ENCODE measurements at regions of chr6 and their contacts with region 1.

Region 1: DNA sequence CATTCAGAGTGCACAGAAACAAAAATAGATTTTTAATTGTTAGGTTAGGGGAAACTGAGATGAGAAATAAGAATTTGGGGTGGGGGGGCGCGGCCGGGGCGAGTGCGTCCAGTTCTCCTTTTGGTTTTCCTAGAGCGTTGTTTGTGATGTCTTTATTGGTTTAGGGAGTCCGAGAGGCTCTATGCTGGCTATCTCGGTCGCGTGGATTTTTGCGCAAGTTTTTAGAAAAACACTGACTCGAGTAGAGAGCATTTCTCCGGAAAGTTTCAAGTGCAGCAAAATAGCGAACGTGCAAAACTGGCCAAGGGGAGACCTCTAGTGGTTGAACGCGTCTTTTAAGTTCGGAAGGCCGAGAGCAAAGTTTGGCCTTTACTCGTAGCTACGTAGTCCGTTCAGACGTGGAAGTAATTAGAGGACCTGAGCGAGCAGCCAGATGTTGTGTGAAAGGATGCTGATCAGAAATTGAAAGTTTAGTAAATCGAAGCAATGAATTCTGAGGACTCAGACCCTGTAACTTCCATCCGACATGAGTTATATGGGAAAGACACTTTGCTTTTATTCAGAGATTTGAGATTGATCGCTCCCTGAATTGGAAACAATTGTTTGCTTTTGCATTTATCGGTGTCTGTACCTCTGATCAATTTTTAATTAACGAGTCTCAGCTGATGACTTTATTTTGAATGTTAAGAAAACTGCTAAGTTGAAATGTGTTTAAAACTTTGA is 2.7 kb downstream of the L3MBTL3 start:
- DNase-seq: peak; percentile 49 to 95 (median 78)

Region 2: GRCh38 chr6:129498950-129499842 is 521.9 kb before region 1 on chr6:
- intact Hi-C with region 1: loop called (anchors 10 kb)
- DNase-seq: no peak

Region 3: DNA sequence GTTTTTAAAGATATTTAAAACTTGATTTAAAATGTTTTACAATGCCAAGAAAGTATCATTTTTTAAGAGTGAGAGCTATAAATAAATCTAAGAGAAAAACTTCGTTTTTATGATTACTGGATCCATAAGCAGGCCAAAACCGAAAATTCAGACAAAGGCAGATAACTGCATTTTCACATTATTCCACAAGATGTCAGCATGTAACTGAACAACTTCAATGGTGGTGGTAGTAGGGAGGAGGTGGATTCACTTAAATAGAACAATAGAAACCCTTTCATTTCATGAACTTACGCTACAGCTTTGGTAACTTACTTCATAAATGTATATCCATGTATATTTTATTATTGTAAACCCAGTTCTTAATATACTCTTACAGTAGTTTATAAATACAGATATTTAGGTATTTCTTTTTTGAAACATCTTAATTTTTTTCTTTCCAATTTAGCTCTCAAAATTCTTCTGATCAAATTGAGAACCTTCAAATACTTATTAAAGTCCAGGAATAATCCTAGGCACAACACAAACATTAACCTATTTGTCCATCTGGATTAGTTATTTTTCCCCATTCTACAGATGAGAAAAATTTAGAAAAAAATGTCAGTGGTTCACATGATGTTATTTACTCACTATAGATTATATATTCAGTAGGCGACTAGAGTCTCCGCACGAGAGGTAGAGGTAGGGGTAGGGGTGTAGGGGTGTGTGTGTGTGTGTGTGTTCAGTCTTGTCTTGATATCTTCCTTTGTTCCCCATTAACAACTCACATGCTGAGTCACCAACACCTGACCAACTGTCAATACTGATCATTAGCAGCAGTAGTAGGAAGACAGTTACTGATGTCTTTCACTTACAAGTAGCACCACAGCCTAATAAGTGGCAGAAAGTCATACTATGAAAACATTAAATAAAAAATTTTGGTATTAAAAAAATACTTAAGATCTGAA is 422.6 kb before region 1 on chr6:
- intact Hi-C with region 1: loop called (anchors 2 kb)
- DNase-seq: no peak

Region 4: GRCh38 chr6:129774697-129775447 is 246.2 kb before region 1 on chr6:
- intact Hi-C with region 1: loop called (anchors 10 kb)
- DNase-seq: peak; percentile 43 to 96 (median 78)

Region 5: DNA sequence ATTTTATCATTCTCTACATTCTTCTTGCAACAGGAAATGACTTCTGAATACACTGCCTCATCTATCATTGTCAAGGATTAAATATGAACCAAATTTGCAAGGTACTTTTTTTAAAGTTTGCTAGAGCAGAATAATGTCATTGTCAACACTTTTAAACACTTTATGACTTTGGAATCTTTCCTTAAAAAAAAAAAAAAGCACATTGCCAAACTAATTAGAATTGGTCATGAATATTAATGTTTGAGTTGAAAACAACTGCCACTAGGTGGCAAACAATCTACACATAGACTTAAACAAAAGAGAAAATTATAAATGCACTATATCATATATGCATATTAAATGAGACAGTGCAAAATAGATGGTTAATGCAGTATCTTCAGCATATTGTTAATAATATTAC is 127.4 kb before region 1 on chr6:
- intact Hi-C with region 1: loop called (anchors 5 kb)
- DNase-seq: no peak

Region 6: DNA sequence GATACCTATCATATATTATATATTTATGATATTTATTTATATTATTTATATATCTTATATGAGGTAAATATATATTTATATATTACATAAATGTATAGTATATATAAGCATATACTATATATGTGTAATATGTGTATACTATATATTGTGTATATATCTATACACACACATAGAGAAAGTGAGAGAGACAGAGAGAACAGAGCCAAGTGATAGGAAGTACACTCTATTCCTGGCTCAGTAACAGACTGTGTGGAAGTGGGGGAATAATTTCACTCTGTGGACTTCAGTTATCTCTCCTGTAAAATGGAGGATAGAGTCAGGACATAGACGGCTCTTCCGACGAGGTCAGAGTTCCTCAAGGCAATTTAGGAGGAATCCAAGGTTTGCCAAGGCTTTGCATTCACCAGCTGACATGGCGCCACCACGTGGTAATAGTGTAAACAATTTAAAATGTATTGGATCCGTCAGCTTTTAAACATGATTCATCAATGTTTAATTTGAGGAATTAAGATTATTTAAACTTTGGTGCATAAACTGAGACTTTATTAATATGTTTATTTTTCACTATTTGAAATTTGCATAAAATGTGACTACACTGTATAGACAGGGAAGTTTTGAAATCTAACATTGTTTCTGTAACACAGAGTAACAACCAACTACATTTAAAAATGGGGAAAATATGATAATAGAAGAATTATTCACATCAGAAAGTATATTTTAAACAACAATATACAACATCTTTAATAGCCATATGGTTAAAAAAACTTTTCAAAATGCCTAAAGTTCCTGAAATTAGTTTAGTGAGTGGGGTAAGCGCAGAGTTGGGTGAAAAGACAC is 84.5 kb before region 1 on chr6:
- intact Hi-C with region 1: loop called (anchors 5 kb)
- DNase-seq: peak in 7 of 10 donors; percentile 22 to 85 (median 47)